ENCODE measurements at regions of chr2 and their contacts with region 1.

Region 1: GRCh38 chr2:206159346-206160124 is at the starts of genes EEF1B2 and NDUFS1:
- DNase-seq: peak; percentile 92 to 98 (median 96)
- ATAC-seq: peak; percentile 87 to 90 (median 88)
- H3K4me3 ChIP-seq: peak within 1 kb of the TSS; percentile 78 to 96
- H3K4me3 Mint-ChIP-seq: peak within 1 kb of the TSS; percentile 95 to 99 (median 99)
- H3K27ac ChIP-seq: peak within 1 kb of the TSS; percentile 73
- H3K27ac Mint-ChIP-seq: peak within 1 kb of the TSS; percentile 96 to 98
- H3K4me1 ChIP-seq: peaks cover 13 to 25% of the 10 kb centered on the region in 2 experiments
- H3K4me1 Mint-ChIP-seq: peaks cover 57 to 63% (median 62%) of the 10 kb centered on the region in 3 donors
- H3K27me3 ChIP-seq: no peaks in the 10 kb centered on the region
- H3K27me3 Mint-ChIP-seq: no peaks in the 10 kb centered on the region
- total RNA-seq, gene EEF1B2: 803 to 1,031 (median 879) TPM
- total RNA-seq, gene NDUFS1: 42.1 to 58.1 (median 51.4) TPM

Region 2: DNA sequence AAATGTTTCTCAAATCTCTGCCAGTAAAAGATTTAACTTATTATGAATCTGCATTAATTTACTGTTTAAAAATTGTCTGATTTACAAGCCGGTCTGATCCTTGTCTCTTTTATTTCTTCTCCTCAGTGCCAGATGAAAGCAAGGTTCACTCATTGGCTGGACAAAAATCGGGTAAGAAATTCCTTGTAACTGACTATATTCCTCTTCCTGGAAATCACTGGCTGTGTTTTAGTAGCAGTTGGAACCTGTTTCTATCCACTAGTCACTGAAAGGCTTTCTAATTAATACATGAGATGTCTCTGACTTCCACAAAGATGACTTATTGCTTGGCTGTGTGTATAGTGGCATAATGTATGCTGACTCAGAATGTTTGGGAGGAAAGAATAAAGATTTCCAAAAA is 913.9 kb before region 1 on chr2:
- CTCF ChIA-PET with region 1: no interaction called
- POLR2A ChIA-PET with region 1: no interaction called
- DNase-seq: no peak
- ATAC-seq: no peak
- H3K4me3 ChIP-seq: no peak overlapping the region
- H3K4me3 Mint-ChIP-seq: no peak overlapping the region
- H3K27ac ChIP-seq: no peak overlapping the region
- H3K27ac Mint-ChIP-seq: no peak overlapping the region
- H3K4me1 ChIP-seq: no peaks in the 10 kb centered on the region
- H3K4me1 Mint-ChIP-seq: no peaks in the 10 kb centered on the region
- H3K27me3 ChIP-seq: no peaks in the 10 kb centered on the region
- H3K27me3 Mint-ChIP-seq: no peaks in the 10 kb centered on the region

Region 3: DNA sequence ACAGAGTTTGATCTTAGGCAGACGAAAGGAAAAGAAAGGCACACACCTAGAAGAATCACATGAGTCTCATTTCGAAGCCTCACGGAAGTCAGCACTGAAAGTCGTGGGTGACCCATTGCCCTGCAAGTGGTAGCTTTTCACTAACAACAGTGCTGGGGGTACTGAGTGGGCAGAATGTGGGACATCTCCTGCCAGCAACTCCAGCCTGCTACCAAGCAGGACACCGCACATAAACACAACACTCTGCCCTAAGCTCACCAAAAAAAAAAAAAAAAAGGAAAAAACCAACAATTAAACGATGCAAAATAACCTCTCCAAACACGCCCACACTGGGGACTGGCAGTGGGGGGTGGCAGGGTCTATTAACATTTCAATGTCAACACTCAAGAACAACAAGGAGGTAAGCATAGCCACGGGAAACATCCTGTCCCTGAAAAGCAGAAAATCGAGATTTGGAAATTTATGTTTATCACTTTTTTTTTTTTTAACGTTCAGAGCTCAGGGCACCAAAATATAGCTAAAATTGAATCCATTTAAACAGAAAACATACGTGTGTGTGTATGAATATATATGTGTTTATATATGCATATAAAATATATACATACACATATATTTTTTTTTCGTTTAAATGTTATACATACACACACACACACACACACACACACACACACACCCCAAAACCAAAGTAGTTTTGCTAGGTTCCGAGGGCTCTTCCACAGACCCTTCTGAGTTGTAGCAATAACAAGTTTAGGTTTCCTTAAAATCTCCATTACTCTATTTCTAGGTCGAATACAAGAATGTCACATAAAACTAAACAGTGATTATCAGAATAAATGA is 75.7 kb before region 1 on chr2:
- CTCF ChIA-PET with region 1: interaction called, 7 to 12 read pairs
- POLR2A ChIA-PET with region 1: interaction called, 3 read pairs
- DNase-seq: peak in 7 of 35 experiments; percentile 6 to 48 (median 11)
- ATAC-seq: no peak
- H3K4me3 ChIP-seq: peak overlapping the region; percentile 89 to 93
- H3K4me3 Mint-ChIP-seq: peak overlapping the region; percentile 96 to 99 (median 97)
- H3K27ac ChIP-seq: peak overlapping the region; percentile 79
- H3K27ac Mint-ChIP-seq: peak overlapping the region; percentile 99
- H3K4me1 ChIP-seq: peaks cover 18 to 25% of the 10 kb centered on the region in 2 experiments
- H3K4me1 Mint-ChIP-seq: peaks cover 57 to 64% (median 63%) of the 10 kb centered on the region in 3 donors
- H3K27me3 ChIP-seq: no peaks in the 10 kb centered on the region
- H3K27me3 Mint-ChIP-seq: no peaks in the 10 kb centered on the region

Measured in T-cell (primary cell).